ENCODE measurements at regions of chr10 and their contacts with region 1.

Region 1: GRCh38 chr10:21372651-21373410 is 152.7 kb downstream of the SKIDA1 start:
- DNase-seq: peak in 4 of 5 donors; percentile 33 to 51 (median 44)
- ATAC-seq: peak; percentile 58 to 95 (median 94)
- H3K4me3 ChIP-seq: peak overlapping the region in 4 of 12 donors; percentile 0 to 35 (median 26)
- H3K27ac ChIP-seq: peak overlapping the region in 5 of 12 donors; percentile 13 to 75 (median 41)
- H3K4me1 ChIP-seq: peaks cover 0 to 20% (median 9%) of the 10 kb centered on the region in 12 donors
- H3K27me3 ChIP-seq: no peaks in the 10 kb centered on the region
- CTCF ChIP-seq: no peak
- POLR2A ChIP-seq: no peak

Region 2: GRCh38 chr10:21432271-21432670 is 59.4 kb after region 1 on chr10:
- intact Hi-C with region 1: loop called in 1 of 10 experiments (anchors 10 kb)
- DNase-seq: no peak
- ATAC-seq: no peak
- H3K4me3 ChIP-seq: no peak overlapping the region
- H3K27ac ChIP-seq: no peak overlapping the region
- H3K4me1 ChIP-seq: no peaks in the 10 kb centered on the region
- H3K27me3 ChIP-seq: no peaks in the 10 kb centered on the region
- CTCF ChIP-seq: no peak
- POLR2A ChIP-seq: no peak

Measured in heart left ventricle (tissue), 16 donors.